ENCODE measurements at regions of chrX and their contacts with region 1.

Region 1: GRCh38 chrX:47193475-47194193 is at the start of gene UBA1:
- DNase-seq: peak; percentile 95
- H3K4me3 ChIP-seq: peak within 1 kb of the TSS; percentile 77 to 88 (median 88)
- H3K27ac ChIP-seq: peak within 1 kb of the TSS; percentile 76
- H3K4me1 ChIP-seq: peaks cover 39% of the 10 kb centered on the region
- H3K27me3 ChIP-seq: no peaks in the 10 kb centered on the region
- CTCF ChIP-seq: peak; percentile 49 to 58
- POLR2A ChIP-seq: peak; percentile 74
- total RNA-seq, gene UBA1: 236 and 237 TPM in 2 replicates

Region 2: DNA sequence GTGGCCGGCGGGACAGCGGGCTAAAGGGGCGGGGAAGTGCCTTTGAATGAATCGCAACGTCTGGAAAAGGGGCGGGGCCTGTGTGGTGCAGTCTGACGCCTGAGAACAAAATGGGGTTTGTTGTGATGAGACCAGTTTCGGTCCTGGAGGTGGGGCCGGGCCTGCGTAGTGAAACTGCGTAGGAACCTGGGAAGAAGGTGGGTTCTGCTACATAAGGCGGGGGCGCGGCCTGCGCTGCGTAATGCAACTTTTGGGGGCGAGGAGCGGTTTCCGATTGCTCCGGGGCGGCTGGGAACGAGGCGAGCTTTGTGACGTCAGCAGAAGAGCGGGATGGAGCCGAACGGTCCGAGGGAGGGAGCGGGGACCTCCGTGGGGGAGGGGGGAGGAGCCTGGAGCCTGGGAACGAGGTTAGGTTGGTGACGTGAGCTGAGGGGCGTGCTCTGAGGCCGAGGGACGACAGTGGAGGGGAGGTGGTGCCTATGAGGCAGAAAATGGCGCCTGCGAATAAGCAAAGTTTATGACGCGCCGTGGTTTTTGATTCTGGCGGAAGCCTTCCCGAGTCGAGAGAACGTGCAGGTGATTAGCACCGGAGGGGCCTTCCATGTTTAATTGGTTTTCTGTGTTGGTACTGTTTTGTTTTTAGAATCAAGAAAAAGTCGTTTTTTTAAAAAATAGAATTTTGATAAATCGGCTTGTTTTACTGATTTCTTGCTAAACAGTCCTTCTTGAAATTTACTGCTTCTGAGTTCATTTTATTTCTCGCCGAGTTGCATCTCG is 39.9 kb after region 1 on chrX:
- CTCF ChIA-PET with region 1: no interaction called
- POLR2A ChIA-PET with region 1: no interaction called
- dilution Hi-C with region 1: no loop called
- intact Hi-C with region 1: loop called (anchors 1 kb)
- DNase-seq: peak; percentile 93
- H3K4me3 ChIP-seq: peak overlapping the region; percentile 42 to 96 (median 74)
- H3K27ac ChIP-seq: peak overlapping the region; percentile 95
- H3K4me1 ChIP-seq: peaks cover 3% of the 10 kb centered on the region
- H3K27me3 ChIP-seq: no peaks in the 10 kb centered on the region
- CTCF ChIP-seq: no peak
- POLR2A ChIP-seq: peak; percentile 56

Region 3: DNA sequence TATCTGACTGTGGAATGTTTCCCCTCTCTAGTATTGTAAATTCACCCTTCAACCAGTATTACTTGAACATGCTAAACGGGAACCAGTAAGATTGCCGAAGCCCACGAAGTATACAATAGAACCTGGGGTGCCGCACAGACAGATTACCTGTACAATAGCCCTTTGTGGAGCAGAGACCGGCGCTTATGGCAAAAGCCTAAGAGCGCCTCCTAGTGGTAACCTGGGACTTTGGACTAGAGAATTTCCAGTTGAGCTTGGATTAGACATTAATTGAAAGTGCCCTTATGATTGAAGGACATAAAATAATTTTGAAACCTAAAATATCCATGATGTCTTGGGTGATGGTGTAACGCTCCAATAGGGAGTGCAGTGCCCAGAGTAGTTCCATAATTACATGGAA is 190.9 kb after region 1 on chrX:
- CTCF ChIA-PET with region 1: interaction called, 17 read pairs
- POLR2A ChIA-PET with region 1: no interaction called
- dilution Hi-C with region 1: no loop called
- intact Hi-C with region 1: no loop called
- DNase-seq: peak; percentile 57
- H3K4me3 ChIP-seq: no peak overlapping the region
- H3K27ac ChIP-seq: no peak overlapping the region
- H3K4me1 ChIP-seq: no peaks in the 10 kb centered on the region
- H3K27me3 ChIP-seq: no peaks in the 10 kb centered on the region
- CTCF ChIP-seq: peak; percentile 46 to 51
- POLR2A ChIP-seq: no peak

Region 4: GRCh38 chrX:47482512-47483309 is 289.1 kb after region 1 on chrX and contains the start of gene ZNF41:
- CTCF ChIA-PET with region 1: no interaction called
- POLR2A ChIA-PET with region 1: no interaction called
- dilution Hi-C with region 1: no loop called
- intact Hi-C with region 1: loop called (anchors 1 kb)
- DNase-seq: peak; percentile 84
- H3K4me3 ChIP-seq: peak within 1 kb of the TSS; percentile 54 to 92 (median 82)
- H3K27ac ChIP-seq: peak within 1 kb of the TSS; percentile 85
- H3K4me1 ChIP-seq: peaks cover 9% of the 10 kb centered on the region
- H3K27me3 ChIP-seq: no peaks in the 10 kb centered on the region
- CTCF ChIP-seq: no peak
- POLR2A ChIP-seq: peak; percentile 17
- total RNA-seq, gene ZNF41: 7.5 TPM in 2 replicates

Region 5: GRCh38 chrX:47523297-47523696 is 329.7 kb after region 1 on chrX:
- CTCF ChIA-PET with region 1: interaction called, 12 read pairs
- POLR2A ChIA-PET with region 1: no interaction called
- dilution Hi-C with region 1: no loop called
- intact Hi-C with region 1: loop called (anchors 1 kb)
- DNase-seq: peak; percentile 72
- H3K4me3 ChIP-seq: peak overlapping the region in 2 of 3 experiments; percentile 56 to 66
- H3K27ac ChIP-seq: no peak overlapping the region
- H3K4me1 ChIP-seq: peaks cover under 1% of the 10 kb centered on the region
- H3K27me3 ChIP-seq: no peaks in the 10 kb centered on the region
- CTCF ChIP-seq: peak; percentile 60 to 87
- POLR2A ChIP-seq: no peak

Region 6: GRCh38 chrX:47637546-47638195 is 444.0 kb after region 1 on chrX:
- CTCF ChIA-PET with region 1: no interaction called
- POLR2A ChIA-PET with region 1: no interaction called
- dilution Hi-C with region 1: no loop called
- intact Hi-C with region 1: loop called (anchors 5 kb)
- DNase-seq: peak; percentile 86
- H3K4me3 ChIP-seq: peak overlapping the region; percentile 3 to 44 (median 35)
- H3K27ac ChIP-seq: no peak overlapping the region
- H3K4me1 ChIP-seq: no peaks in the 10 kb centered on the region
- H3K27me3 ChIP-seq: no peaks in the 10 kb centered on the region
- CTCF ChIP-seq: peak; percentile 34 to 56
- POLR2A ChIP-seq: no peak

Measured in endothelial cell of umbilical vein (primary cell).